Heart left ventricle (tissue), 16 donors: ENCODE measurements at regions of chrX and their contacts with region 1.

Region 1: GRCh38 chrX:45801554-45801953 is 600.9 kb upstream of the DIPK2B start:
- DNase-seq: no peak
- ATAC-seq: peak in 1 of 4 donors; percentile 64
- H3K4me3 ChIP-seq: peak overlapping the region in 2 of 12 donors; percentile 19 to 33
- H3K27ac ChIP-seq: peak overlapping the region in 2 of 12 donors; percentile 2 to 49
- H3K4me1 ChIP-seq: peaks cover 0 to 25% (median 0%) of the 10 kb centered on the region in 12 donors
- H3K27me3 ChIP-seq: peaks cover 0 to 41% (median 0%) of the 10 kb centered on the region in 9 donors
- CTCF ChIP-seq: peak in 11 of 12 donors; percentile 10 to 46 (median 33)
- POLR2A ChIP-seq: no peak

Region 2: DNA sequence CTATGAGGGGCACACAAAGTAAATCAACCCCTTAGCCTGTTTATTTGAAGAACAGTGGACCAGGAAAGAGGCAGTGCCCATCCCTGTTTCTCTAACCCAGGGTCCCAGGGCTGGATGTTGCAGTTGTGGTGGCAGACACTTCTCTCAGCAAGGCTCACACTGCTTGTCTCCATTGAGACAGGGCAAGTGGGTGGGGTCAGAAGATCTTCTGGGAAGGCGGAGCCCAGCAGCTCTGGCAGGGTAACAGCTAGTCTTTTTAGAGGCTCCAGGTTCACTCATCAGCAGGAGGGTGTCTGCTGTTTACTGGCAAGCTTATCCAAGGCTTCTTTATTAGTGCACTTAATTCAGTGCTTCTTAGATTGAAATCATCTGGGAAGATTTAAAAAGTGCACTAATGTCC is 58.9 kb after region 1 on chrX:
- intact Hi-C with region 1: no loop called
- DNase-seq: no peak
- ATAC-seq: no peak
- H3K4me3 ChIP-seq: no peak overlapping the region
- H3K27ac ChIP-seq: no peak overlapping the region
- H3K4me1 ChIP-seq: no peaks in the 10 kb centered on the region
- H3K27me3 ChIP-seq: peaks cover 0 to 46% (median 0%) of the 10 kb centered on the region in 9 donors
- CTCF ChIP-seq: no peak
- POLR2A ChIP-seq: no peak

Region 3: DNA sequence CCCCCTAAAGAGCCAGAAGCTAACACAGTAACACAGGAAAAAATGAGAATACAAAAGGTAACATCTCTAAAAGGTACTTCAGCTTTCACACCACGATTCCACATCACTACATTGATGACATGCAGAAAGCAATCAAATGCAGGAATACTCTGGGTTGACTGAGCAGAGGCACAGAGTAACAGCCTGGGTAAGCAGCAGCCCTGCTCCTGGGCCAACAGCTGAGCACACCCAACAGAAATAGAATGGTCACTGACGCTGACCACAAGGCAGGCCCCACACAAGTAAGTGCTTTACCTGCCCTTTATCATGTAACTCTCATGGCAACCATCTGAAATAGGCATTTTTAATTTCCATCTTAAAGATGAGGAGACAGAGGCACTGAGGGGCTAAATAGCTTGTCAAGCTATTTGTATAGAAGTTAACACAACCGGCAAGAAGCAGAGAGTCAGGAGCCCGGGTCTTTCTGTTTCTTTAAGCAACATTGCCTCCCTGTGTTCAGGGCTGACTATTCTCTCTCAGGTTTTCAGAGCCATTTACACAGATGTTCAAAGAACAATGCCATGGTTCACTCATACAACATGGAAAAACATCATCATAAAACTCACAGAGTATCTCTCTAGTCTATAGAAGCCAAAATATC is 574.8 kb after region 1 on chrX:
- intact Hi-C with region 1: loop called in 3 of 10 experiments (anchors 10 kb)
- DNase-seq: peak in 1 of 5 donors; percentile 4
- ATAC-seq: peak; percentile 55 to 83 (median 75)
- H3K4me3 ChIP-seq: no peak overlapping the region
- H3K27ac ChIP-seq: no peak overlapping the region
- H3K4me1 ChIP-seq: no peaks in the 10 kb centered on the region
- H3K27me3 ChIP-seq: peaks cover 0 to 19% (median 0%) of the 10 kb centered on the region in 9 donors
- CTCF ChIP-seq: peak in 7 of 12 donors; percentile 20 to 43 (median 28)
- POLR2A ChIP-seq: no peak

Region 4: GRCh38 chrX:46408553-46409407 is 607.2 kb after region 1 on chrX:
- intact Hi-C with region 1: loop called in 1 of 10 experiments (anchors 2 kb)
- DNase-seq: peak; percentile 37 to 74 (median 54)
- ATAC-seq: no peak
- H3K4me3 ChIP-seq: no peak overlapping the region
- H3K27ac ChIP-seq: no peak overlapping the region
- H3K4me1 ChIP-seq: no peaks in the 10 kb centered on the region
- H3K27me3 ChIP-seq: no peaks in the 10 kb centered on the region
- CTCF ChIP-seq: peak; percentile 56 to 92 (median 76)
- POLR2A ChIP-seq: no peak